Activated T-helper 1 cell treated with anti-CD3 and anti-CD28 coated beads, Interleukin-12 subunit alpha, Interleukin-12 subunit beta, Interleukin-2, Interleukin-4 antibody, amounts not matched to agents 30 ng/mL and 10 ng/mL and 1 ng/mL, durations not matched to agents 14 hours and 24 hours and 36 hours (primary cell): ENCODE measurements at regions of chr22 and their contacts with region 1.

Region 1: GRCh38 chr22:41940832-41941765 is 5.9 kb downstream of the CENPM start:
- DNase-seq: peak; percentile 82
- H3K4me3 Mint-ChIP-seq: peak overlapping the region; percentile 85
- H3K27ac Mint-ChIP-seq: peak overlapping the region; percentile 100
- H3K4me1 Mint-ChIP-seq: peaks cover 53% of the 10 kb centered on the region
- H3K27me3 Mint-ChIP-seq: no peaks in the 10 kb centered on the region

Region 2: GRCh38 chr22:41666661-41667258 is 274.3 kb before region 1 on chr22:
- intact Hi-C with region 1: loop called (anchors 1 kb)
- DNase-seq: peak; percentile 96
- H3K4me3 Mint-ChIP-seq: peak overlapping the region; percentile 81
- H3K27ac Mint-ChIP-seq: peak overlapping the region; percentile 95
- H3K4me1 Mint-ChIP-seq: peaks cover 17% of the 10 kb centered on the region
- H3K27me3 Mint-ChIP-seq: no peaks in the 10 kb centered on the region

Region 3: GRCh38 chr22:41697126-41697775 is 243.8 kb before region 1 on chr22:
- intact Hi-C with region 1: loop called (anchors 1 kb)
- DNase-seq: peak; percentile 81
- H3K4me3 Mint-ChIP-seq: peak overlapping the region; percentile 40
- H3K27ac Mint-ChIP-seq: peak overlapping the region; percentile 84
- H3K4me1 Mint-ChIP-seq: peaks cover 13% of the 10 kb centered on the region
- H3K27me3 Mint-ChIP-seq: no peaks in the 10 kb centered on the region

Region 4: GRCh38 chr22:41780746-41781505 is 160.2 kb before region 1 on chr22:
- intact Hi-C with region 1: loop called (anchors 1 kb)
- DNase-seq: peak; percentile 90
- H3K4me3 Mint-ChIP-seq: peak overlapping the region; percentile 83
- H3K27ac Mint-ChIP-seq: peak overlapping the region; percentile 91
- H3K4me1 Mint-ChIP-seq: peaks cover 41% of the 10 kb centered on the region
- H3K27me3 Mint-ChIP-seq: peaks cover 2% of the 10 kb centered on the region

Region 5: DNA sequence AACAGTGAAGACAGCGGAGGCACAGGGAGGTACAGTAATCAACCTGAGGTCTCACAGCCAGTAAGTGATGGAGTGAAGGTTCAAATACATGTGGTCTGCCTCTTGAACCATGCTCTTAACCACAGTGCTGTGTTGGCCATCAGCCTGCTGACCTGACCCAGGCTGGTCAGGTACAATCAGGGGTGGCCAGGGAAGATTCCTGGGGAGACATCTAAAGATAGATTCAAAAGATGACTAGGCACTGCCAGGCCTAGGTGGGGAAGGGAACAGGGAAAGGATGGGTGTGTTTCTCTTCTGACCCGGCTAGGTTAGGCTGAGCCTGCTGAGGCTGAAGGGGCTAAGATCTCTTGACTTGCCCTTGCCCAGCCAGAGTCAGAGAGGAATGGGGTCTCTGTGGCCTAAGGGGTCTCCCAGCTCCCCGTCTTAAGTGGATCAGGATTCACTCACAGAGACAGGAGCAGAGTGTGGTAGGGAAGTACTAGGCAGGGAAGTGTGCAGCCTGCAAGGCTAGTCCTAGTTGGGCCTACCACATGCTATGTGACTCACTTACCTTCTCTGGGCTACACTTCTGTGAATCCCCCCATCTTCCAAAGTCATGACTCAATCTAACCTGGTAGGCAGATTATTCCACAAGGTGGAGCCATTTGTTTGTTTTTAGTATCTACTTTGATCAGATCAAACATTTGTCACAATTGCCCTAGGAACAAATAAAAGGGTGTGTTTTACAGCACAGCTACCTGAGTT is 118.6 kb before region 1 on chr22:
- intact Hi-C with region 1: loop called (anchors 1 kb)
- DNase-seq: peak; percentile 23
- H3K4me3 Mint-ChIP-seq: no peak overlapping the region
- H3K27ac Mint-ChIP-seq: peak overlapping the region; percentile 82
- H3K4me1 Mint-ChIP-seq: peaks cover 36% of the 10 kb centered on the region
- H3K27me3 Mint-ChIP-seq: no peaks in the 10 kb centered on the region

Region 6: DNA sequence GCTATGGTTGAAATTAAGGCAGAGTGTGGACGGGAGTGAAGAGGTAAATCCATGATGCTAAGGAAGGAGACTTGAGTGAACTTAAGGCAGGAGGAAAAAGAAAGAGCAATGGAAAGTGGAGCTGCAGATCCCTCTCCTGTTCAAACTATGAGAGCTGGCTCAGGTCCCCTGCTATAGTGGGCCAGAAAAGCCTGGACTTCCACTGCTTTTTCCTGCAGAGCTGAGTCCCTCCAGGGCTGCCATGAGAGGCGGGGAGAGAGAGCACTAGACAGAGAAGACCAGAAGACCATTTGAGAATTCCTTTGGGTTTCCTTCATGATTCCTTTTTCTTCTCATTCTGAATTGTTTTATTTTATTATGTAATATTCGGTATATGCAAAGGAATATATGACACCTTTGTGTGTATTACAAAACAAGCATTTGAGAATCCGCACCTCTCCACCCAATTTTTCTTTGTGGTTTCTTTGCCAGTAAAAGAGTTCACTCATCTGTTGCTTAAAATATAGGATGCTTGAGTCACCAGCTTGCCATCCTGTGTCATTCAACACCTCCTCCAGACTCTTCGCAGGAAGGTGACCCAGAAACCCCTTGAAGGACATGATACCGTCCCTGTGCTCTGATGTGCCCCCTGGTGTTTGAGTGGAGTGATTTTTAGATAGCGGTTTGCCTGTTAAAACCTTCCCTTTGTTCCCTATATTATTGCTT is 83.8 kb before region 1 on chr22:
- intact Hi-C with region 1: loop called (anchors 1 kb)
- DNase-seq: peak; percentile 71
- H3K4me3 Mint-ChIP-seq: peak overlapping the region; percentile 60
- H3K27ac Mint-ChIP-seq: peak overlapping the region; percentile 99
- H3K4me1 Mint-ChIP-seq: peaks cover 72% of the 10 kb centered on the region
- H3K27me3 Mint-ChIP-seq: no peaks in the 10 kb centered on the region

Region 7: GRCh38 chr22:41919357-41920224 is 21.5 kb before region 1 on chr22:
- intact Hi-C with region 1: loop called (anchors 1 kb)
- DNase-seq: no peak
- H3K4me3 Mint-ChIP-seq: peak overlapping the region; percentile 69
- H3K27ac Mint-ChIP-seq: no peak overlapping the region
- H3K4me1 Mint-ChIP-seq: peaks cover 6% of the 10 kb centered on the region
- H3K27me3 Mint-ChIP-seq: peaks cover 31% of the 10 kb centered on the region

Region 8: DNA sequence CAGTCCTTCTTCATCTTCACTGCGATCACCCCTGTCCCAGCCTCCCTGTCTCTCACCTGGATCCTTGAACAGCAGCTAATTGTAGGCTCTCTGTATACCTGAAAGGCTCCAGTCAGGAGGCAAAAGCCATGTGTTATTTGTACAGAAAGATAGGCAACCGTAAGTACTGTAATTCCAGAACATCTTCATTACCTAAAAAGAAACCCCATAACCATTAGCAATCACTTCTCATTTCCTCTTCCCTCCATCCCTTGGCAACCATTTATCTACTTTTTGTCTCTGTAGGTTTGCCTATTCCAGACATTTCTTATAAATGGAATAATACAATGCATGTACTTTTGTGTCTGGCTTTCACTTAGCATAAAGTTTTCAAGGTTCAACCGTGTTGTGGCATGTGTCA is 111.7 kb after region 1 on chr22:
- intact Hi-C with region 1: no loop called
- DNase-seq: no peak
- H3K4me3 Mint-ChIP-seq: no peak overlapping the region
- H3K27ac Mint-ChIP-seq: no peak overlapping the region
- H3K4me1 Mint-ChIP-seq: peaks cover 4% of the 10 kb centered on the region
- H3K27me3 Mint-ChIP-seq: no peaks in the 10 kb centered on the region

Region 9: DNA sequence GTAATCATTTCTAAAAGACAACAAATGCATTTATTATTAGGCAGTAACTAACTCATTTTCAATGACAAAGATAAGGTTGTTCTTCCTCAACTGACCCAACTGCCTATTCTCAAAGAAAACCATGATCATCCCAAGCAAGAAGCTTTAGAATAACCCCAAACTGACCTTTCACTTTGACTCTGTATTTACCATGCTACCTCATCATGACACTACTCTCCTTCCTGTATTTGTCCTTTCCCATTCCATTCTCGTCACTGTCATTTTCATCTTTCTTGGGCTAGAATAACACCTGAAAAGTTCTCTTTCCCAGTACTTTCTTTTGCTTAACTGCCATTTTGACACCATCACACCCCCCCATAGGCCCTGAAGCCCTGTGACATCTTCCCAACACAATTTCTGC is 281.0 kb after region 1 on chr22:
- intact Hi-C with region 1: no loop called
- DNase-seq: no peak
- H3K4me3 Mint-ChIP-seq: no peak overlapping the region
- H3K27ac Mint-ChIP-seq: peak overlapping the region; percentile 18
- H3K4me1 Mint-ChIP-seq: peaks cover 35% of the 10 kb centered on the region
- H3K27me3 Mint-ChIP-seq: no peaks in the 10 kb centered on the region